ENCODE measurements at regions of chr2 and their contacts with region 1.

Region 1: DNA sequence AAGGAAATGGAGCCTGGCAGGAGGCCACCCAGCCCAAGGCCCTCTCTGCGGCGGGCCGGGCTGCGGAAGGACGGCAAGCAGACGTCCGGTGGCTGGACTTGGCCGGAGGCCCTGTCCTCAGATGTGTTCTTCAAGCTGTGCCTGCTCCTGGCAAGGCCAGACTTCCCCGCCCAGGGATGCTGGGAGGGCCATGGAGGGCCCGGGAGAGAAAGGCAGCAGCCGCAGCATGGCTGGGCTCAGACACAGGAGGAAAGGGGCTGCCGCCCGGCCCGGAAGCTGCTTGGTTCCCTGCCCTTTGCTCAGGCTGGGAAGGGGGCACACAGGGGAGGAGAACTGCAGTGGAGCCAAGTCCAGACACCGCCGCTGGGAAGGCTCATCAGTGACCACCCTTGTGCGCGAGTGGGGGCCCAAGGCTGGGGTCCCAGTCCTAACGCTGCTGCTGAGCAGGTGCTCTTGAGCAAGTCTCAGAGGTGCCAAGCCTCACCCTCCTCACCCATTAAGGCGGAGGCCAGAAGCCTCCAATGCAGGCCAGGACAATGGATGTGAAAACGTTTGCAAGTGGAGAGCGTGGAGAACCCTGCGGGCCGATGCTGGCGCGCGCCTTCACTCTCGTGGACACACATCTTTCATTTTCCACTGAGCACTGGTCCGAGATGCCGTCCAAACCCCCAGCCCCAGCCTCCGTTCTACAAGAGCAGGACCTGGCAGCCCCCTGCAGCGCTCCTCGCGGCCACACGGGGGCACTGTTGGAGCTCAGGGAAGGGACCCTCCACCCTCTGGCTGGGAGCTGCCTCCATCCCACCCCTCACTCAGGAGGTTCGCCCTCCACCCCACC is 7.9 kb downstream of the CROCC2 start:
- DNase-seq: peak; percentile 75
- H3K4me3 Mint-ChIP-seq: no peak overlapping the region
- H3K27ac Mint-ChIP-seq: no peak overlapping the region
- H3K4me1 Mint-ChIP-seq: no peaks in the 10 kb centered on the region
- H3K27me3 Mint-ChIP-seq: peaks cover 10% of the 10 kb centered on the region

Region 2: GRCh38 chr2:240983361-240983995 is 69.5 kb after region 1 on chr2:
- CTCF ChIA-PET with region 1: interaction called, 3 read pairs
- intact Hi-C with region 1: loop called (anchors 10 kb)
- DNase-seq: peak; percentile 43
- H3K4me3 Mint-ChIP-seq: no peak overlapping the region
- H3K27ac Mint-ChIP-seq: no peak overlapping the region
- H3K4me1 Mint-ChIP-seq: peaks cover 2% of the 10 kb centered on the region
- H3K27me3 Mint-ChIP-seq: no peaks in the 10 kb centered on the region

Region 3: GRCh38 chr2:241069821-241070281 is 155.8 kb after region 1 on chr2:
- CTCF ChIA-PET with region 1: no interaction called
- intact Hi-C with region 1: loop called (anchors 10 kb)
- DNase-seq: no peak
- H3K4me3 Mint-ChIP-seq: no peak overlapping the region
- H3K27ac Mint-ChIP-seq: no peak overlapping the region
- H3K4me1 Mint-ChIP-seq: no peaks in the 10 kb centered on the region
- H3K27me3 Mint-ChIP-seq: no peaks in the 10 kb centered on the region

Region 4: GRCh38 chr2:241702132-241703031 is 788.4 kb after region 1 on chr2:
- CTCF ChIA-PET with region 1: no interaction called
- intact Hi-C with region 1: no loop called
- DNase-seq: peak; percentile 82
- H3K4me3 Mint-ChIP-seq: peak overlapping the region; percentile 82
- H3K27ac Mint-ChIP-seq: peak overlapping the region; percentile 61
- H3K4me1 Mint-ChIP-seq: peaks cover 24% of the 10 kb centered on the region
- H3K27me3 Mint-ChIP-seq: no peaks in the 10 kb centered on the region

Region 5: DNA sequence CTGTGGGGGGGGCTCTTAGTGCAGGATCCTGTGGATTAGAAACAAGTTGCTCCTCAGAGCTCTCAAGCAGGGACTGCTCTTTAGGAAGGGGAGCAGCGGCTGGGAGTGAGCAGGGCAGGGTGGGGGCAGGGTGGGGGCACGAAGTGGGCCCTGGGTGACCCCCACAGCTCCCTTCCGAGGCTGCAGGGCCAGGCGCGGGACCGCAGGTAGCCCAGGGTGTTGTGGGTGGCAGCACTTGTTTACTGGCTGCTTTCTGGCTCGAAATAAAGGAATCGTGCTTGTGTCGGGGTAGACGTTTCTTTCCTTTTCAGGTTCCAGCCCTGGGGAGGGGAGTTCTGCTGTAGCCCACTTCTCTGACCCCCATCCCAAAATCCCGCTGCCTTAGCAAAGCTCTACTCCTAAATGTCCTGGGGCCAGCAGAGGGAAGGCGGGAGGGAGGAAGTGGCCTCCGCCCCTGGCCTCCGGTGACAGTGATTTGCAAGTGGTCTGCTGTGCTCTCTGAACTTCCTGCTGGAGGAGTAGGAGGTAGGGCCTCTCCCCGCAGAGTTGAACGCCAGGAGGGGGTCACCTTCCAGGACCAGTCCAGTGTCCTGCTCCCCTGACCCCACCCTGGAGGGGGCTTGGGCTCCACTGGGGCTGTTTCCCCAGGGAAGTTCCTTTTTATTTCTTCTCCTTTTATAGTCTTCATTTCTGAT is 903.2 kb after region 1 on chr2:
- CTCF ChIA-PET with region 1: no interaction called
- intact Hi-C with region 1: no loop called
- DNase-seq: no peak
- H3K4me3 Mint-ChIP-seq: no peak overlapping the region
- H3K27ac Mint-ChIP-seq: no peak overlapping the region
- H3K4me1 Mint-ChIP-seq: peaks cover 9% of the 10 kb centered on the region
- H3K27me3 Mint-ChIP-seq: peaks cover 3% of the 10 kb centered on the region